Calu3 (cell line): ENCODE measurements at regions of chr2 and their contacts with region 1.

Region 1: GRCh38 chr2:232327105-232328041 is 51.2 kb upstream of the ALPP start:
- DNase-seq: peak; percentile 83
- H3K4me3 Mint-ChIP-seq: no peak overlapping the region
- H3K27ac Mint-ChIP-seq: no peak overlapping the region
- H3K4me1 Mint-ChIP-seq: no peaks in the 10 kb centered on the region
- H3K27me3 Mint-ChIP-seq: no peaks in the 10 kb centered on the region
- CTCF ChIP-seq: peak; percentile 87

Region 2: GRCh38 chr2:231907787-231908186 is 419.6 kb before region 1 on chr2:
- CTCF ChIA-PET with region 1: no interaction called
- intact Hi-C with region 1: loop called (anchors 2 kb)
- DNase-seq: no peak
- H3K4me3 Mint-ChIP-seq: no peak overlapping the region
- H3K27ac Mint-ChIP-seq: no peak overlapping the region
- H3K4me1 Mint-ChIP-seq: no peaks in the 10 kb centered on the region
- H3K27me3 Mint-ChIP-seq: peaks cover 47% of the 10 kb centered on the region
- CTCF ChIP-seq: no peak

Region 3: DNA sequence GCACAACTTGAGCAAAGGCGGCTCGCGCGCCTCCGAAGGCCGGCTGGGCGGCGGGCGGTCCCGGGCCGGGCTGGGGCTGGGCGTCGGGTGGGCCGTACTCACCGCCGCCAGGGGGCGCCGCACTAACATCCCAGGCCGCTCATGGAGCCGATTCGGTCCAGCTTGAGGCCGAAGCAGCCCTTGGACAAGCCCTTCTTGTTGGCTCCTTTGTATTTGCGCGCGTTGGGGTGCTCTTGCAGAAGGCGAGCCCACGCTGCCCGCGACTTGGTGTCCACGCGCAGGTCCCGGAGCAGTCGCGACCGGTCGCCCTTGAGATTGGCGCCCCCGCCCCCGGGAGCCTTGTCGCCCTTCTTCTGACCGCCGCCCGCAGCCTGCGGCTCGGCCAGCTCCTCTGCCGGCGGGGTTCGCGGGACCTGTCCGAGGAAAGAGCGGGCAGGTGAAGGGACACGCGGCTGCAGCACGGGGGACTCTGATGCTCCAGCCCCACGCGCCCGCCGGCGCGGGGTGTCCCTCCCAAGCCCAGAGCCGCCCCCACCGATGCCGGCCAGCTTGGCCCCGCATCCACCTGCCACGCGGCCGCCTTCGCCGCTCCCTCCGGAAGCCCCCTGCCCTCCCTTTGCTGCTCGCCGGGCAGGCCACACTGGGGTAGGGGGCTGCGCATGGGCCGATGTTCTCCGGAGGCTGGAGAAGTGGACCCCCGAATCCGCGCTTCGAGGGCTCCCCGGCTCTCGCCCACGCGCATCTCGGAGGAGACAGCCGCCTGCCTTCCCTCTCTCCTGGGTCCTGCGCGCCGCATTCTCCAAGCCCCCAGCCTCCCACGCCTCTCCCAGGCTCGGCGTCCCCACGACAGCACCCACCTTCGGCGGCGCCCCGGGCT is 401.8 kb before region 1 on chr2:
- CTCF ChIA-PET with region 1: interaction called, 3 read pairs
- intact Hi-C with region 1: loop called (anchors 2 kb)
- DNase-seq: peak; percentile 89
- H3K4me3 Mint-ChIP-seq: peak overlapping the region; percentile 64
- H3K27ac Mint-ChIP-seq: no peak overlapping the region
- H3K4me1 Mint-ChIP-seq: peaks cover 12% of the 10 kb centered on the region
- H3K27me3 Mint-ChIP-seq: peaks cover 91% of the 10 kb centered on the region
- CTCF ChIP-seq: peak; percentile 97